Posterior cingulate gyrus (tissue), 11 donors: ENCODE measurements at regions of chr22 and their contacts with region 1.

Region 1: GRCh38 chr22:36144886-36145541 is 15.5 kb downstream of the APOL3 start:
- DNase-seq: peak in 7 of 10 donors; percentile 56 to 95 (median 62)

Region 2: DNA sequence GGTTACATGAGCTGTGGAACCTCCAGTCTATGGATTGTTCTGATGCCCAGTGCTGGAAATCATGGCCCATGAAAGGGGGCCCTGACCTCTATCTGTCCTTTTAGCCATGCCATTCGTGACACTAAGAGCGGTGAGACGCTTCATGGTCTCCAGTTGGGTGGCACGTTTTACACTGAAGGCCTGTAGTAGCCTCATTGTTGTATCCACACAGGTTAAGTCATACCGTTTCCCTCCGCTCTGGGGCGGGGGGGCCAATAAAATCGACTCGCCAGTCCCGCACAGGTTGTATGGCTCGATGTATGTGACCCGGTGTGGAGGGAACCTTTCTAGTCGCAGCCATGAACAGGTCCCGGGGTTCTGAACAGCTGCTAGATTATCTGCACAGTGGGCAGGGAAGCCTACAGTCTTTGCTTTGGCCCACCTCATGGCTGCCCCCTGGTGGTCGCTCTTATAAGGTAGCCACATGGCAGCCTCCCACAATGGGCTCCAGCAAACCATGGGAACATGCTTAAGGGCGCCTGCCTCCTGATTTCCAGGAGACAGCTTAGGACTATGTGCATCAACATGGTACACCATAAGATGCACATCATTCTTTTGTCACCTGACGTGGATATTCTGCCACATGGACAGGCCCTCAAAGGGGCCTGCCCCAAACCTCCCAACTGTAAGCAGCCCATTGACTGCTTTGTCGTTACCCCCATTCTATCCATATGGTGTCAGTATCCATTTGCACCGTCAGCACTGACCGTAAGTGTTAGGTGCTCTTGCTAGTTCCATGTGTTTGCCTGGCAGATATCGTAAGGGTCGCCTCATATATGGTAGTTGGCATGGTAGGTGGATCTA is 35.2 kb after region 1 on chr22:
- intact Hi-C with region 1: loop called (anchors 2 kb)
- DNase-seq: peak in 9 of 10 donors; percentile 48 to 92 (median 78)

Region 3: DNA sequence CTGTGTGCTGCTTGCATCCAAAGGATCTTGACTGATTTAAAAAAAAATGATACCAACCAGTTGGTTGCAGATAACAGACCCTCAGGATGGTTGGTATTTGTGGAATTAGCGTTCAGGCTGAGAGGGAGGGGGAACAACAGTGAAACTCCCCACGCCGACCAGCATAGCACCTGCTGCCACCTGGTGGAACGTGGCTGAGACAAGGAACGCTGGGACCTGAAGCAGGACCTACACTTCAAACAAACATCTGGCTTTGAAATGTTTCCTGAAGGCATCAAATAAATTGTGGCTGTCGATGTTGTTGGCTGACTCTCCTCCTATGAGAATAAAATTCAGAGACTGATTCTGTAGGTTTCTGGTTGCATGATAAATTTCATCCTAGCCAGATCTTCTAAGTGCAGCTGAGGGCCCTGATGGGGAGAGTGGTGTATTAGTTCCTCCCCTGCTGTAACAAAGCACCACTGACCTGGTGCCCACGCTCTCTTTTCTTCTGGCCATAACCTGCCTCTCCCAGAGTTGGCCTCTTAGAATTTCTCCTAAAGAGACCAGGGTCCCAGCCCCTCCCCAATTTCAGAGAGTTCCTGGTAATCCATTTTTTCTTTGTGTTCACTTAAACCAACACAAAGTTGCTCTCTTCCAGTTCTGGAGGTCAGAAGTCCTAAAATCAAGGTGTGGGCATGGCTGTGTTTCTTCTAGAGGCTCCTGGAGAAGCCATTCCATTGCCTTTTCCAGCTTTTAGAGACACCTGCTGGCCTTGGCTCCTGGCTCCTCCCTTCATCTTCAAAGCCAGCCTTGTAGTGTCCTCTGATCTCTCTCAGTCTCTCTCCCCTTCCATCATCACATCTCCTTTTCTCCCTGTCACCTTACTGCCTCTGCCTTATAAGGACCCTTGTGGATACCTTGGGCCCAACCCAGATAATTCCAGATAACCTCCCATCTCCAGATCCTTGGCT is 77.1 kb after region 1 on chr22:
- intact Hi-C with region 1: loop called (anchors 5 kb)
- DNase-seq: peak in 8 of 10 donors; percentile 41 to 91 (median 54)

Region 4: DNA sequence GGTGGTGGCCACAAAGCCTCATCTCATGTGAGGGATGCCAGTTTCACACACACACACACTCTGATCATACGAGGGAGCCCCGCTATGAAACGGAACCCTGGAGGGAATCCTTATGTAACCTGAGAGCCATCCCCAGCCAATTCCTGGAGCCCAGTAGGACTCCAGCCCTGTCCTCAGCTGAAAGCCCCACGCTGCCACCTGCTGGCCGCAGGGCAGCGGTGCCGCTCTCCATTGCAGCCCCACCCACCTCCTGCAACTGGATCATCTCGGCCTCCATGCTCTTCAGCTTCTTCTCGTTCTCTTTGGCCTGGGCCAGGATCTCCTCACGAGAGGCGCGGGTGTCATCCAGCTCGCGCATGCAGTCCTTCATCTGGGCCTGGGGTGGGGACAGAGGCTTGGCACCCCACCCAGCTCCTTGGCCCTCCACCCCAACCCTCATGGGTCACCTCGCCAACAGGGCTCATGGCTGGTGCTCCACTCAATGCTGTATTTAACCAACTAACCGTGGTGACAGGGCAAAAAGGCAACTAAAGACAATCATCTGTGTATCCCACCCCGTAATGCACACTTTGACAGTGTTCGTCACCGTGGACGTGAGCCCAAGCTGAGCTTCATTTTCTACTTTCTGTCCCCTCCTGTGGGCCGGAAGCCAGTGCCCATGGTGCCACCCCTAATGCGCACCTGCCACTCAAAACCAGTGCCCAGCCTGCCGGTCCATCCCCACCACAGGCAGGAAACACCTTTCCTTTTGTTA is 141.6 kb after region 1 on chr22:
- intact Hi-C with region 1: loop called (anchors 2 kb)
- DNase-seq: peak; percentile 71 to 98 (median 82)